GM10248 (cell line): ENCODE measurements at regions of chr13 and their contacts with region 1.

Region 1: GRCh38 chr13:99516153-99516929 is 15.1 kb downstream of the TM9SF2 start:
- DNase-seq: no peak
- CTCF ChIP-seq: no peak

Region 2: DNA sequence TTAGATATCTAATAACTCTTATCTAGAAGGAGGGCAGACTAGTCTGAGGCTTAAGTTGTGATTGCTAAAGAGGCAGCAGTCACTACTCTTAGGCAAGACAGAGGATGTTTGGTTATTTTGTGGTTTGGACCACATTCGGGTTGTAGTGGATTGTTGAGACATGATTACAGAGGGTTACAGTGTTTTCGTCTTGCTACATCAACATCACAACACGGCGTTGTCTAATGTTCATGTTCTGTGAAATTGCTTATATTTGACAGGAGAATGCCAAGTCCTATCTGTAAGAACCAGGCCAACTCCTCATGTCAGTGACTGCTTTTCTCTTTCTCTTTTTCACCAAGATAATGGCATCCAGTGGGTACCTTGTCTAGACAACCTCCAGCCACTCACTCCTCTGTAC is 31.9 kb before region 1 on chr13:
- CTCF ChIA-PET with region 1: no interaction called
- POLR2A ChIA-PET with region 1: no interaction called
- DNase-seq: no peak
- CTCF ChIP-seq: no peak

Region 3: DNA sequence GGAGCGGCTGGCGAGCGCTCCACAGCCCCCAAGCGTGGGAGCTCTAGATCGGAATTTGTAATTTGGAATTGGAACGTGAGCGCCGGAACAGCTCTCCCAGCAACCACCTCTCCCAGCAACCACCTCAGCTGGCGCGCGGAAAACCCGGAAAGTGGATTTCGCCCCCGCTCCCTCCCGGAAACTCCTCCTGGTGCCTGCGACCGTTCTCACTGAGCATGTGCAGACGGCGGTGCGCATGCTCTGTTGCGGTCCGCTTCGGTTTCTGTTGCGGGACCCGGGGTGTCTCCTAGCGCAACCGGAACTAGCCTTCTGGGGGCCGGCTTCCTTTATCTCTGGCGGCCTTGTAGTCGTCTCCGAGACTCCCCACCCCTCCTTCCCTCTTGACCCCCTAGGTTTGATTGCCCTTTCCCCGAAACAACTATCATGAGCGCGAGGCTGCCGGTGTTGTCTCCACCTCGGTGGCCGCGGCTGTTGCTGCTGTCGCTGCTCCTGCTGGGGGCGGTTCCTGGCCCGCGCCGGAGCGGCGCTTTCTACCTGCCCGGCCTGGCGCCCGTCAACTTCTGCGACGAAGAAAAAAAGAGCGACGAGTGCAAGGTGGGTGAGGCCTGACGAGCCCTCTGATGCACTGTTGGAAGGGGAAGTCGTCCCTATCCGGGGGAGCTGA is 15.0 kb before region 1 on chr13 and contains the start of gene TM9SF2:
- CTCF ChIA-PET with region 1: interaction called, 12 read pairs
- POLR2A ChIA-PET with region 1: no interaction called
- DNase-seq: peak; percentile 92
- CTCF ChIP-seq: no peak

Region 4: GRCh38 chr13:99528547-99528946 is 12.2 kb after region 1 on chr13:
- CTCF ChIA-PET with region 1: interaction called, 20 read pairs
- POLR2A ChIA-PET with region 1: no interaction called
- DNase-seq: peak; percentile 47
- CTCF ChIP-seq: peak; percentile 45